ENCODE measurements at regions of chr14 and their contacts with region 1.

Region 1: GRCh38 chr14:93892923-93893558 is 34.1 kb upstream of the FAM181A start:
- DNase-seq: peak; percentile 41
- ATAC-seq: peak; percentile 87
- H3K4me3 ChIP-seq: no peak overlapping the region
- H3K27ac ChIP-seq: no peak overlapping the region
- H3K4me1 ChIP-seq: no peaks in the 10 kb centered on the region
- H3K27me3 ChIP-seq: no peaks in the 10 kb centered on the region
- CTCF ChIP-seq: peak; percentile 91

Region 2: GRCh38 chr14:93648440-93649168 is 244.4 kb before region 1 on chr14:
- CTCF ChIA-PET with region 1: no interaction called
- POLR2A ChIA-PET with region 1: no interaction called
- in situ Hi-C with region 1: no loop called
- intact Hi-C with region 1: loop called (anchors 2 kb)
- DNase-seq: no peak
- ATAC-seq: peak; percentile 78
- H3K4me3 ChIP-seq: no peak overlapping the region
- H3K27ac ChIP-seq: no peak overlapping the region
- H3K4me1 ChIP-seq: no peaks in the 10 kb centered on the region
- H3K27me3 ChIP-seq: no peaks in the 10 kb centered on the region
- CTCF ChIP-seq: peak; percentile 47

Region 3: GRCh38 chr14:93742761-93743160 is 150.3 kb before region 1 on chr14:
- CTCF ChIA-PET with region 1: no interaction called
- POLR2A ChIA-PET with region 1: no interaction called
- in situ Hi-C with region 1: no loop called
- intact Hi-C with region 1: loop called (anchors 5 kb)
- DNase-seq: no peak
- ATAC-seq: no peak
- H3K4me3 ChIP-seq: no peak overlapping the region
- H3K27ac ChIP-seq: no peak overlapping the region
- H3K4me1 ChIP-seq: no peaks in the 10 kb centered on the region
- H3K27me3 ChIP-seq: no peaks in the 10 kb centered on the region
- CTCF ChIP-seq: no peak

Measured in Panc1 (cell line).